Activated CD4-positive, alpha-beta memory T cell treated with anti-CD3 and anti-CD28 coated beads for 36 hours (primary cell): ENCODE measurements at regions of chr14 and their contacts with region 1.

Region 1: DNA sequence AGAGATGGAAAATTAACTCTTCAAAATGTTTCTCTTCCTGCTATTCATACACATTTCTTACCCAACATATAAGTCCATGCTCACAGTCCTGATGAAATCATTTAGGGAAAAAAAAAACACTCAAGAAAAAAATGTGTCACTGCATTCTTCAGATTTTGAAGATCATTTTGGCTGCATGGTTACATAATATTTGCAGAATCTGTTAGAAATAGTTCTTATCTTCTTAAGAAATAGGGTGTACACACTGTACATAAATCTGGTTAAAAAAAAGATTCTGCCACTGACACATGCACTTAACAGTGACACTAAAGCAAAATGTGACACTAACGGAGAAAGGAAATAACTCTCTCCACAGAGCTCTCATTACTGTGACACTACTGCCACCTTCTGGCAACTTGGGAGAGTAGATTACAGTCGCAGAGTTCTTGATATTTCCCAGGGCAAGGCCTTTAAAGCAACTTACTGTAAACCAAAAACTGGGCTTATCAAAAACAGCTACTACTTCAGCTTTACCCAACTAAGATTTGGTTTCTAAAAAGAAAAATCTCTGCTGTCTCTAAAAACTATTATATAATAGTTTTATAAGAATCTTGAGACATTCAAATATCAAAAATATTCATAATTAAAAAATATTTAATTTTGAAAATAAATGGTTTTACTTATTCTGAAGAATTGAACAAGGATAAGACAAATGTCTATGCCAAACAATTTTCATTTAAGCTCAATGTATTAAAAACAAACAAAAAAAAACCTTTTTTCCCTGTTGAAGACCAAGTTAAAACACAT is 65.0 kb downstream of the SETD3 start:
- DNase-seq: peak; percentile 70
- H3K4me3 Mint-ChIP-seq: no peak overlapping the region
- H3K27ac Mint-ChIP-seq: no peak overlapping the region
- H3K4me1 Mint-ChIP-seq: peaks cover 28% of the 10 kb centered on the region
- H3K27me3 Mint-ChIP-seq: no peaks in the 10 kb centered on the region

Region 2: DNA sequence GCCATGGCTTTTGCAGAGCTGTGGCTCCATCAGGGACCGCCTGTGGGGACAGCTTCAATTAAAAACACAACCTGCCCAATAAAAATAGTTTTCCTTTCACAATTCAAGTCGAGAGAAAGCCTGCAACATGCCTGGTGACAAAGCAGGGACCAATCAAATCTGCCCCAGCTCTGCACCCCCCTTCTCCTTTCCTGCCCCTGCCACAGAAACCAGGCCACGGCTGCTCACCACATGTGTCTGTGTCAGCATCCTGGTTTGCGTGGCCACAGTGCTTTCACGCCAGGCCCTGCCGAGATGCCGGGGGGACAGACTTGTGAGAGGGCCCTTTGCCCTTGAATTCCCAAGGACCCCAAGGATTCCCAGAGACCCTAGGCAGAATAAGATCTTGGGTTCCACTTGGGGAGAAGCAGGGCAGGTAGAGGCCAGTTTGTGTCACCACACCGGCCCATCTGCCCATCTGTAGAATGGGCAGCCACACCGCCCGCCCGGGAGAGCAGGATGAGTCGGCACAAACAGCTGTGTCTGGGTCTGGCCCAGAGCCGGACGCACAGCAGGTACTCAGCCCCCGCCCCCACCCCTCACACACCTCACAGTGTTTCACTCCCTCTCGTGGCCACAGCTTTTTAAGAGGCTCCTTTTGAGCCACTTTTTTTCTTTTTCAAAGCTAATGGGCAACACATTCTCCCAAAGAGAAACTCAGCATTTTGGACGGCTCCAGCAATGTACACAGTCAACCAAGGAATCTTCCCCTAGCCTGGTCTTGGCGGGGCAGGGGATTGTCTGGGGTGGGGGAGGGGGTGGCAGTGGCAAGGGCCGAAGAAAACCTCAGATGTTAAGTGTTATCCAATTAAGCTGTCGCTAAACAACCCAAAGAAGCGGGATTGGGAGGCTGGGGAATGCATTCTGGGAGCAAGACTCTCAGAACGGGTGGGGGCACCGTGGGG is 185.2 kb before region 1 on chr14:
- CTCF ChIA-PET with region 1: no interaction called
- POLR2A ChIA-PET with region 1: no interaction called
- intact Hi-C with region 1: no loop called
- DNase-seq: peak; percentile 94
- H3K4me3 Mint-ChIP-seq: peak overlapping the region; percentile 68
- H3K27ac Mint-ChIP-seq: peak overlapping the region; percentile 96
- H3K4me1 Mint-ChIP-seq: peaks cover 95% of the 10 kb centered on the region
- H3K27me3 Mint-ChIP-seq: no peaks in the 10 kb centered on the region

Region 3: DNA sequence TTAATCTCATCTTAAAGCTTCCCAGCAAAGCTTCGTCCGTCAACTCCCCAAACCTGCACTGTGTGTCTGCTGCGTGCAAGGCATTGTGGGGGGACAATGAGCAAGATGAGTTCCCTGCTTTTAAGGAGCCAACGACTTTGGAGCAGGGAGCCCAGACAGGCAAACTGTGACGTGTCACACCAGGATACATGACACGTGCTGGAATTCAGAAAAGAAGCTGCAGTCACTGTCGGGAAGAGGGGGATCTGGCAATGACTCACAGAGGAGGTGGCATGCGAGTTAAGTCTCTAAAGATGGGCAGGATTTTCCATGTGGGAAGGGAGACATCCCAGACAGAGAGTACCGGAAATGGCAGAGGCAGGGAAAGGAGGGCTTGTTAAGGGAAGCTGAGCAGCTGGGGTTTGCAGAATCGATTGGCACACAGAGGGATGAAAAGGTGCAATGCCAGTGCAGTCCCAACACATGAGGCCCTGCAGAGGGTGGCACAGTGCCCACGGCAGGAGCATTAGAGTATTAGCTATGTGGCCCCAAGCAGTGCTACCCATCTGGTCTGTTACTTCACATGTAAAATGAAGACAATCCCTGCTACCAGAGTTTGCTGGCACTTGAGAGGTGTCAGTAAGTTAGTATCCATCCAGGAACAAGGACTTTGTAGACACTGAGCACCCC is 12.1 kb after region 1 on chr14:
- CTCF ChIA-PET with region 1: interaction called, 17 read pairs
- POLR2A ChIA-PET with region 1: no interaction called
- intact Hi-C with region 1: no loop called
- DNase-seq: no peak
- H3K4me3 Mint-ChIP-seq: no peak overlapping the region
- H3K27ac Mint-ChIP-seq: no peak overlapping the region
- H3K4me1 Mint-ChIP-seq: peaks cover 17% of the 10 kb centered on the region
- H3K27me3 Mint-ChIP-seq: no peaks in the 10 kb centered on the region